AG04449 (cell line): ENCODE measurements at regions of chr12 and their contacts with region 1.

Region 1: DNA sequence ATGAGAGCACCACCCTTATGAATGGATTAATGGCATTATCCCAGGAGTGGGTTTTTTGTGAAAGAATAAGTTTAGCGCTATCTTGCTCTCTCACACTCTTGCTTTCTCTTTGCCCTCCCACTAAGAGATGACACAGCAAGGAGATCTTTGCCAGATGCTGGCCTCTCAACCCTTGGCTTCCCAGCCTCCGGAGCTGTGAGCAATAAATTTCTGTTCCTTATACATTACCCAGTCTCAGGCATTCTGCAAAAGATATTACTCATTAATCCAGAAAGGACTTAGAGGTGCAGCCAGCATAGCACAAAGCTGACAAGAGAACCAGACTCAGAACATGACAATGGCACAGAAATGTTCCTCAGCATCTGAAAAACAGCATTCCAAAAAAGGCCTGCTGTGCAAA is 190.6 kb downstream of the ITPR2 start:
- DNase-seq: no peak
- H3K4me3 ChIP-seq: no peak overlapping the region
- CTCF ChIP-seq: no peak

Region 2: DNA sequence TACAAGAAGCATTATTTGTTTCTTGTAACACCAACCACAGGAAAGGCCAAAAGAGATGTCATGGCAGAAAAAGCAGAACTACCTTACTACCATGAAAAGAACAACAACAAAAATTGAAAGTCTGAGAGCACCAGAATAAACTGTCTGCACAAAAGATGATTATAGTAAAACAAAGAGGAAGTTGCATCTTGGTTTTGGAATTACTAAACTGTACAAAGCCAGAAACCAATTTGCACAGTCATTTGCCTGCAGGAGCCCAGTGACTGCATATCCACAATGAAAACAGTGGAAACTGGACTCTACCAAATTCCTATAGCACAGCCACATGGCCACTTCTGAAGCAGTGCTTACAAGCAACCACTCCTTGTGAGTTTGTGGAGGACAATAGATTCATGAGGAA is 170.8 kb before region 1 on chr12:
- CTCF ChIA-PET with region 1: no interaction called
- POLR2A ChIA-PET with region 1: no interaction called
- DNase-seq: peak; percentile 37
- H3K4me3 ChIP-seq: no peak overlapping the region
- CTCF ChIP-seq: no peak

Region 3: GRCh38 chr12:26576266-26576665 is 66.1 kb before region 1 on chr12:
- CTCF ChIA-PET with region 1: no interaction called
- POLR2A ChIA-PET with region 1: no interaction called
- DNase-seq: no peak
- H3K4me3 ChIP-seq: no peak overlapping the region
- CTCF ChIP-seq: no peak

Region 4: DNA sequence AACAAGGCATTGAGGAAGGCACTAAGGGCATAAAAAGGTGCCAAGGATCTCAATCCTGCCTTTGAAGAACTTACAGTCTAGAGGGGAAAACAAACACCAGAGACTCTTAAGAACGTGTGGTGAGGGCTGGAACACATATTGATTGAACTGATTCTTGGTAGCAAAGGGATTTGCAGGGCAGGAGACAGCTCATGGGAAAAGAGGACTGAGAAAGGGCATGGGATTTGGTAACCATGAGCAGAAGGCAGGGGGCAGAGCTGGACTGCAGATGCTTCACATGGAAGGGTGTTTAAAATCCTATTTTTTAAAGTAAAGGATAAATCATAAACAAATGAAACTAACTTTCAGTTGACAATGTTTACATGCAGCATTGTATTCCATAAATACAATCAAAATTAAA is 12.5 kb before region 1 on chr12:
- CTCF ChIA-PET with region 1: interaction called, 23 read pairs
- POLR2A ChIA-PET with region 1: no interaction called
- DNase-seq: no peak
- H3K4me3 ChIP-seq: peak overlapping the region; percentile 4
- CTCF ChIP-seq: peak; percentile 39